Cardiac septum (tissue), 1 donor: ENCODE measurements at regions of chr5 and their contacts with region 1.

Region 1: DNA sequence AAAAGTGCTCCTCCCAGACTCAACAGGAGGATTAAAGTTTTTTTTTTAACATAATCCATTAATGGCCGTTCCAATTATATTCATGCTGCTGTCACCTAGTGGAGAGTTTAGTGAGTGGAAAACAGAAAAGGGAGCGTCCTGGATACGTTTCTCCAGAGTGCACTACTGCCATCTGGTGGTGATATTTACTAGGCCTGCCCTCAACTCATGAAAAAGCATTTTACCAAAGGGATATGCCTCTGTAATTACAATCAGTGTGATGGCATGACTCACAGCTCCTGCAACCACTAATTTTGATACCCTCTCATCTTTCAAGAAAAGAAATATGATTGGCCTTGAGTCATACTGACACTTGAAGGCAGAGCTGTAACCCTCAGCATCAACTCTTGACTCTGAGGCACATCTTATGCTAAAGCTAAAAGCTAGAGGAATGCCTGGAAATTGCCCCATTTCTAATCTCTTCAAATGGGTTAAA is 20.0 kb downstream of the MINAR2 start:
- DNase-seq: no peak

Region 2: DNA sequence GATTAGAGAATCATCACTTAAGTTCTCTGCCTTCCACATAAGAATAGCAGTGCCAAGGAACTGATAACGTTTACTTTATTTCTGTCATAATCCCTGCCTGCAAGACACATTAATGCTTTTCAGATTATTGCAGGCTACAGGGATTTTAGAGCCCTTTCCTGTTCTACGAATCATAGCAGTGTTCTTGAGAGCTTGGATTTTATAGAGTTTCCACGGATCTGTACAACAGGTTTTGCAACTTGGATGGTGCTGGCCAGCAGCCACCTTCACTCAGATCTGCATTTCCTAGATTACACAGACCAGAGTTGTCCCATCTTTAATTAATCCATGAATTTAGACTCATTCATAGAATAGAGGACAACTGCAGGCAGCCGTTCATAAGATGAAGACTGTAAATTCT is 1646.3 kb before region 1 on chr5:
- intact Hi-C with region 1: no loop called
- DNase-seq: no peak

Region 3: GRCh38 chr5:128905571-128906110 is 862.3 kb before region 1 on chr5:
- intact Hi-C with region 1: loop called (anchors 5 kb)
- DNase-seq: no peak

Region 4: GRCh38 chr5:129172580-129172979 is 595.4 kb before region 1 on chr5:
- intact Hi-C with region 1: loop called (anchors 5 kb)
- DNase-seq: no peak

Region 5: GRCh38 chr5:129852747-129853352 is 84.9 kb after region 1 on chr5:
- intact Hi-C with region 1: loop called (anchors 5 kb)
- DNase-seq: peak; percentile 79

Region 6: GRCh38 chr5:130323804-130324454 is 556.0 kb after region 1 on chr5:
- intact Hi-C with region 1: no loop called
- DNase-seq: no peak

Region 7: GRCh38 chr5:131109540-131110255 is 1341.8 kb after region 1 on chr5:
- intact Hi-C with region 1: loop called (anchors 5 kb)
- DNase-seq: no peak